Activated CD8-positive, alpha-beta T cell treated with anti-CD3 and anti-CD28 coated beads, Interleukin-2, amount 10 ng/mL, durations not matched to agents 7 days and 5 days (primary cell): ENCODE measurements at regions of chr3 and their contacts with region 1.

Region 1: GRCh38 chr3:119741657-119742590 is 39.1 kb downstream of the CFAP91 start:
- DNase-seq: no peak
- ATAC-seq: no peak
- H3K4me3 Mint-ChIP-seq: no peak overlapping the region
- H3K27ac Mint-ChIP-seq: no peak overlapping the region
- H3K4me1 Mint-ChIP-seq: no peaks in the 10 kb centered on the region
- H3K27me3 Mint-ChIP-seq: peaks cover 28% of the 10 kb centered on the region

Region 2: GRCh38 chr3:119731560-119732343 is 10.2 kb before region 1 on chr3:
- CTCF ChIA-PET with region 1: interaction called, 10 read pairs
- POLR2A ChIA-PET with region 1: no interaction called
- DNase-seq: no peak
- ATAC-seq: no peak
- H3K4me3 Mint-ChIP-seq: no peak overlapping the region
- H3K27ac Mint-ChIP-seq: no peak overlapping the region
- H3K4me1 Mint-ChIP-seq: no peaks in the 10 kb centered on the region
- H3K27me3 Mint-ChIP-seq: peaks cover 22% of the 10 kb centered on the region